ENCODE measurements at regions of chr7 and their contacts with region 1.

Region 1: GRCh38 chr7:137898839-137899721 is 52.3 kb upstream of the DGKI start:
- H3K4me3 ChIP-seq: no peak overlapping the region
- H3K27ac ChIP-seq: no peak overlapping the region
- H3K4me1 ChIP-seq: no peaks in the 10 kb centered on the region
- CTCF ChIP-seq: peak; percentile 93

Region 2: GRCh38 chr7:137606061-137606674 is 292.9 kb before region 1 on chr7:
- CTCF ChIA-PET with region 1: interaction called, 12 read pairs
- POLR2A ChIA-PET with region 1: no interaction called
- H3K4me3 ChIP-seq: no peak overlapping the region
- H3K27ac ChIP-seq: no peak overlapping the region
- H3K4me1 ChIP-seq: no peaks in the 10 kb centered on the region
- CTCF ChIP-seq: no peak

Region 3: DNA sequence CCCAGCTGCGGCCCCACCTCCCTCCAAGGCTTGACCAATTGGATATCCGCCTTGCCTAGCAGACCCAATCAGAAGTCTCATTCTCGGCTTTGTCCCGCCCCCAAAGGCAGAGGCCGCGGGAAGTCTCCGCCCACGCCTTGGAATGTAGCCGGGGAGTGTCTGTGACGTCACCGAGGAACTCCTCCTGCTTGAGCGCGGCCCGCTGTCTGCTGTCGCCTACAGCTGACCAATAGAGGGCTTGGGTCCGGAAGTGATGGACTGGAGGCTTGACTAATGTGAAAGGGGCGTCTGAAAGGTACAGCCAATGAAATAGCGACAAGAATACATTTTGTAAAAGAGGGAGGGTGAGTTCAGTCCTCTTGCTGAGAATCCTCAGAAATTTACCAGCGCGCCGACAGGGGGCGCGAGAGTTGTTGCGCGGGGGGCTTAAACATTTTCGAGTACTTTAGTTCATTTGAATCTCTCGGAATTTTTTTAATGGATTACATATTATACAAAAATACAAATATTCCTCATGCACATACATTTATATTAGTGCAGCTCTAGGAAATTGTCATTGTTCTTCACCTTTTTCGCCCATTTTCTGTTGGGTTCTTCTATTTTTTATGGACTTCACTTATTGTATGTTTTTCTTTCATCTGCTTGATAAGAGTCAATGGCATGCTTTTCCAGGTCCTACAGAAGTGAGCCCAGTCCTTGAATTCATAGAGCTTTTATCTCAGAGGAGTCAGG is 103.2 kb after region 1 on chr7:
- CTCF ChIA-PET with region 1: interaction called, 143 read pairs
- POLR2A ChIA-PET with region 1: no interaction called
- H3K4me3 ChIP-seq: peak overlapping the region; percentile 98
- H3K27ac ChIP-seq: no peak overlapping the region
- H3K4me1 ChIP-seq: no peaks in the 10 kb centered on the region
- CTCF ChIP-seq: peak; percentile 88

Region 4: GRCh38 chr7:138008547-138009349 is 109.7 kb after region 1 on chr7:
- CTCF ChIA-PET with region 1: interaction called, 143 read pairs
- POLR2A ChIA-PET with region 1: no interaction called
- H3K4me3 ChIP-seq: no peak overlapping the region
- H3K27ac ChIP-seq: no peak overlapping the region
- H3K4me1 ChIP-seq: no peaks in the 10 kb centered on the region
- CTCF ChIP-seq: peak; percentile 69

Region 5: DNA sequence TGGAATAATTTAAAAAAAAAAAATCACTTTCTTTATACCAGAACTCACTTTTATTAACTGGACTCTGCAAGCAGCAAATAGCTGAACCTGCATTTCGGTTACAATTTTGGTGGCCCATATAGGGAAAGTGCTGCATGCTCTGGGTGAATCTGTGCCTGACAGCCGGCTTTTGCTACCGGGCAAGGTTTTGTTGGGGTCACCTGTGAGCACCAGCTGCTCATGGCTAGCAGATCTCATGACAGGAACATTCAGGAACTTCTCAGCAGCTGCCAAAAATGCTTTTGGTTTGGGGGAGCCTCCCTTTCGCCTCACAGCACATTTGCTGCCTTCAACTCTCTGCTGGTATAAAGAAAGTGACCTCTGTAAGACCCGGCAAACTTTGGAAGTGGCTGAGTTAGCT is 116.0 kb after region 1 on chr7:
- CTCF ChIA-PET with region 1: interaction called, 143 read pairs
- POLR2A ChIA-PET with region 1: no interaction called
- H3K4me3 ChIP-seq: no peak overlapping the region
- H3K27ac ChIP-seq: no peak overlapping the region
- H3K4me1 ChIP-seq: no peaks in the 10 kb centered on the region
- CTCF ChIP-seq: no peak

Region 6: DNA sequence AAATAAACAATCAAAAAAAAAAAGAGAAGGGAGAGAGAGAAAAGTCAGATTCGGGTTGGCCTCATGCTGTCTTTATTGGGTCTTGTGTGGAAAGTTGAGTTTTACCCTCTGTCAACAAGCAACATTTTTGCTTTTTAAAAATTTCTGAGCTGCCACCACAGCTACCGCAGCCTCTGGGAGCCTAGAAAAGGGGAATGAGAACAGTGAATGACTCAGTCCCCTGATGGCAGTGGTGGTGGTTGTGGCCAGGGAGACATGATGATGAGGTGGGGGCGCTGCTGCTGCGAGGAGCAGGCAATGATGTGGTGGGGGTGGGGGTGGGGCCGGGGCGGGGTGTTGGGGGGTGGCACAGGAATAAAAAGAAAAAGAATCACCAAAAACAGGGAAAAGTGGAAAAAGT is 122.8 kb after region 1 on chr7:
- CTCF ChIA-PET with region 1: interaction called, 10 read pairs
- POLR2A ChIA-PET with region 1: no interaction called
- H3K4me3 ChIP-seq: no peak overlapping the region
- H3K27ac ChIP-seq: no peak overlapping the region
- H3K4me1 ChIP-seq: no peaks in the 10 kb centered on the region
- CTCF ChIP-seq: no peak

Measured in HEK293 (cell line).